Sigmoid colon (tissue), 7 donors: ENCODE measurements at regions of chr11 and their contacts with region 1.

Region 1: GRCh38 chr11:87281496-87281895 is 243.8 kb downstream of the TMEM135 start:
- DNase-seq: no peak
- H3K4me3 ChIP-seq: no peak overlapping the region
- H3K27ac ChIP-seq: no peak overlapping the region
- H3K4me1 ChIP-seq: peaks cover 0 to 17% (median 9%) of the 10 kb centered on the region in 4 donors
- H3K27me3 ChIP-seq: no peaks in the 10 kb centered on the region
- CTCF ChIP-seq: peak in 1 of 4 experiments; percentile 29
- EP300 ChIP-seq: no peak
- POLR2A ChIP-seq: no peak

Region 2: DNA sequence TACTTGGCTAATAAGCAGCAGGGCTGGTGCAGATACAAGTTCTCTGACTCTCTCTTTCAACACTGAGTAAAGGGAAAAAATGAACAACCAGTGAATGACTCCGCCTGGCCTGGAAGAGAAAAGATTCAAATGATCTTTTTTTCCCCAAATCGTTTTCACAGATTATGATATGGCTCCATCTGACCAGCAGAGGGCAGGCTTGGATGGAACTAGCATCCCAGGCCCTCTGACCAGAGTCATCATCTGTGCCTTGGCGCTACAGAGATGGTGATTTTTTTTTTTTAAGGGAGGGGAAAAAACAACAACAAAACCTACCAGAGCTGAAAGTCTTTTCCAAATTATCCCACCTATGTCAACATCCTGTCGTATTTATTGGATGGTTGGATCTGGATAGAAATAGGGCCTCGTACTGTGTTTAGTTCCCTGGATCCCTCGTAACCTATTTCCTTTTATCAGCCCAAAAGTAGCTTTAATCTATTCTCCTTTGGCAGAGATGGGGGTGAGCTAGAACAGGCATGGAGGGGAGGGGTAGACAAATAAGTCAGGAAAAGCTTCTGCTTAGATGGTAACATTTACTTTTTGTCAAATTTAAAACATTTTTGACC is 411.4 kb before region 1 on chr11:
- intact Hi-C with region 1: loop called (anchors 5 kb)
- DNase-seq: peak; percentile 81
- H3K4me3 ChIP-seq: no peak overlapping the region
- H3K27ac ChIP-seq: no peak overlapping the region
- H3K4me1 ChIP-seq: no peaks in the 10 kb centered on the region
- H3K27me3 ChIP-seq: no peaks in the 10 kb centered on the region
- CTCF ChIP-seq: peak; percentile 59 to 69 (median 62)
- EP300 ChIP-seq: no peak
- POLR2A ChIP-seq: no peak

Region 3: GRCh38 chr11:86978756-86979608 is 302.5 kb before region 1 on chr11:
- intact Hi-C with region 1: loop called (anchors 5 kb)
- DNase-seq: no peak
- H3K4me3 ChIP-seq: no peak overlapping the region
- H3K27ac ChIP-seq: peak overlapping the region in 1 of 4 donors; percentile 22
- H3K4me1 ChIP-seq: peaks cover 0 to 17% (median 5%) of the 10 kb centered on the region in 4 donors
- H3K27me3 ChIP-seq: no peaks in the 10 kb centered on the region
- CTCF ChIP-seq: peak in 3 of 4 experiments; percentile 14 to 43 (median 25)
- EP300 ChIP-seq: no peak
- POLR2A ChIP-seq: no peak

Region 4: GRCh38 chr11:87037450-87038234 is 243.9 kb before region 1 on chr11 and contains the start of gene TMEM135:
- intact Hi-C with region 1: loop called (anchors 5 kb)
- DNase-seq: peak; percentile 97
- H3K4me3 ChIP-seq: peak within 1 kb of the TSS; percentile 63 to 85 (median 84)
- H3K27ac ChIP-seq: peak within 1 kb of the TSS; percentile 86 to 89 (median 88)
- H3K4me1 ChIP-seq: peaks cover 0 to 35% (median 13%) of the 10 kb centered on the region in 4 donors
- H3K27me3 ChIP-seq: no peaks in the 10 kb centered on the region
- CTCF ChIP-seq: no peak
- EP300 ChIP-seq: no peak
- POLR2A ChIP-seq: peak; percentile 41 to 49
- total RNA-seq, gene TMEM135: 20.0 to 36.2 (median 28.7) TPM

Region 5: DNA sequence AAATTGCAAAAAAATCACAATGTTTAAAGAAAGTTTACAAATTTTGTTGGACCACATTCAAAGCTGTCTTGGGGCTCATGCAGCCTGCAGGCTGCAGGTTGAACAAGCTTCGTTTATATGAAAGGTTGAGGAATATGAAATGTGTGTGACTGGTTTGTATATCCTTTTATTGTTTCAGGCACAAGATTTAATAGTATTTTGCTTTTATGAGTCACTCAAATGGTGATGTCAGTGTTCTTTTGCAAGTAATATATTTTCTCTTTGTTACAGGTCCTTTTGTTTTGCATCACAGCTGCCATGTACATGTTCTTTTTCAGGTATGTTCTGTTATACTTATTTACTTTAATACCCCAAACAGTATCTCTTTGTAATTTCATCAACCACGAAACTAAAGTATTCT is 45.1 kb before region 1 on chr11:
- intact Hi-C with region 1: no loop called
- DNase-seq: no peak
- H3K4me3 ChIP-seq: no peak overlapping the region
- H3K27ac ChIP-seq: peak overlapping the region in 3 of 4 donors; percentile 33 to 72 (median 41)
- H3K4me1 ChIP-seq: peaks cover 0 to 57% (median 13%) of the 10 kb centered on the region in 4 donors
- H3K27me3 ChIP-seq: no peaks in the 10 kb centered on the region
- CTCF ChIP-seq: no peak
- EP300 ChIP-seq: peak in 2 of 4 donors; percentile 77 to 89
- POLR2A ChIP-seq: no peak